ENCODE measurements at regions of chr4 and their contacts with region 1.

Region 1: GRCh38 chr4:147617173-147617840 is at the start of gene TMEM184C:
- DNase-seq: peak; percentile 98
- H3K4me3 ChIP-seq: peak within 1 kb of the TSS; percentile 61 to 88 (median 84)
- H3K27ac ChIP-seq: peak within 1 kb of the TSS; percentile 82 to 92 (median 88)
- H3K4me1 ChIP-seq: peaks cover 28 to 57% (median 45%) of the 10 kb centered on the region in 6 donors
- H3K27me3 ChIP-seq: no peaks in the 10 kb centered on the region
- CTCF ChIP-seq: peak in 5 of 11 experiments; percentile 8 to 43 (median 35)
- POLR2A ChIP-seq: peak in 1 of 3 donors; percentile 47
- total RNA-seq, gene TMEM184C: 19.2 to 26.3 (median 23.3) TPM

Region 2: DNA sequence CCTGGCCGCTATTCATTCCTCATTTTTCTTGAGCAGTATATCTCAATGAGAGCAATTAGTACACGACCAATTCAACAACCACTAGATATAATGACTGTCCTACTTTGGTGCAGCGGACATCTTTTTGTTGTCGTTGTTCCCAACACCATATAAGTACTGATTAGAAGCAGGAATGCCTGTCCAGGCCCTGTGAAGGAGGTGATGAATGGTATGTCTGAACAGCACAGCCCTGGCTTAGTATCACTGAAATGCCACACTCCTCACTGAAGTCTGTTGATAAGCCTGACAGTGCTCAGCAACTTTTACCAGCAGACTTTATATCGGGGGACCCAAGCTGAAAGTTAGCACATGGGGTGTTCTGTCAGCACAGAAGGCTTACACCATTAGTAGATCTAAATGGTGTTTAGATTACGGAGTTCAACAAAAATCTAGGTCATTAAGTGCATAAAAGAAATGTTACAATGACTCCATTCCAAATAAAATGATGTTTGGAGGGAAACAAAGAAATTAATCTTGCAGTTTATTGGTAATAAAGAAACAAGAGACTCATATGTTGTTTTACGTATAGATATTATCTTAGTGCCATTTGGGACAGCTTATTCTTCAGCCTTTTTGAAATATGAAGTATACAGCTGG is 443.4 kb before region 1 on chr4:
- intact Hi-C with region 1: no loop called
- DNase-seq: no peak
- H3K4me3 ChIP-seq: no peak overlapping the region
- H3K27ac ChIP-seq: no peak overlapping the region
- H3K4me1 ChIP-seq: no peaks in the 10 kb centered on the region
- H3K27me3 ChIP-seq: no peaks in the 10 kb centered on the region
- CTCF ChIP-seq: no peak
- POLR2A ChIP-seq: no peak

Region 3: GRCh38 chr4:147683717-147684700 is 66.7 kb after region 1 on chr4 and contains the start of gene PRMT9:
- intact Hi-C with region 1: loop called (anchors 5 kb)
- DNase-seq: peak; percentile 97
- H3K4me3 ChIP-seq: peak within 1 kb of the TSS; percentile 55 to 77 (median 67)
- H3K27ac ChIP-seq: peak within 1 kb of the TSS; percentile 86 to 94 (median 91)
- H3K4me1 ChIP-seq: peaks cover 11 to 37% (median 21%) of the 10 kb centered on the region in 6 donors
- H3K27me3 ChIP-seq: no peaks in the 10 kb centered on the region
- CTCF ChIP-seq: peak in 1 of 11 experiments; percentile 13
- POLR2A ChIP-seq: peak in 2 of 3 donors; percentile 32 to 64
- total RNA-seq, gene PRMT9: 7.2 to 11.2 (median 9.6) TPM

Measured in spleen (tissue), 13 donors.